PC-3 (cell line): ENCODE measurements at regions of chr17 and their contacts with region 1.

Region 1: DNA sequence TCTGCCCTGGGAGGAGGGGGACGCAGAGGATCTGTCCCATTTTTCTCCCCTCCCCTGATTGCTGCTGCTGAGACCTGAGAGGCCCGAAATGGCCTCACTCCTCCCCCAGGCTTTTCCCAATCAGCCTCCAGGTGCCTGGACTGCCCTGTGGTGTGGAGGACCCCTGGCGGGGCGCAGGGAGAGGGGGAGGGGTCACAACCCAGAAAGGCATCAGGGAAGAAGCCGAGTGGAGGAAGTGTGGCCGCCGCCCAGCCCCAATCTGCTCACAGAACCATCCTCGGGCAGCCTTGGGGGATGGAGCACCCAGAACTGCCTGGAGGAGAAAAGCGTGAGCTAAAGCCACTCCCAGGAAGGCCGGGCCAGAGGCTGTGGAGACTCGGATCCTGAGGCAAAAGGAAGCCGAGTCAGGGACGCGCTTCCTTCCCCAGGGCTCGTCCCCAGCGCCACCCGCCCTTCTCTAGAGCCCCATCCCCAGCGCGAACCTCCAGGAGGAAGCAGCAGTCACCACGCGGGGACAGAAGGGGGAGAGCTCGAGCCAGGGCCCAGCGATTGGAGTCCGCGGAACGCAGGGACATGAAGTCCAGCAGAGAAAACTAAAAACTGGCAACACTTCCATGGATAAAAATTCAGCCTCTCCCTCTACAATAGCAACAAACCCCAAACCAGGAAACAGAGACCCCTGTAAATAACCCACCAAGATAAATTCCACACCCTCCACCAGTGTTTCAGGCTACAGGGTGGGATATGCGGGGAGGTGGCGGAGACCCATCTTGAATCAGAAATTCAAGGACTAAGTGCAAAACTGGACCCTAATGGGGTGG is 116.3 kb upstream of the METRNL start:
- DNase-seq: peak; percentile 82
- ATAC-seq: peak; percentile 96
- H3K4me3 ChIP-seq: peak overlapping the region; percentile 62
- H3K27ac ChIP-seq: peak overlapping the region; percentile 60
- H3K4me1 ChIP-seq: peaks cover 18% of the 10 kb centered on the region
- H3K27me3 ChIP-seq: no peaks in the 10 kb centered on the region
- CTCF ChIP-seq: peak; percentile 74

Region 2: DNA sequence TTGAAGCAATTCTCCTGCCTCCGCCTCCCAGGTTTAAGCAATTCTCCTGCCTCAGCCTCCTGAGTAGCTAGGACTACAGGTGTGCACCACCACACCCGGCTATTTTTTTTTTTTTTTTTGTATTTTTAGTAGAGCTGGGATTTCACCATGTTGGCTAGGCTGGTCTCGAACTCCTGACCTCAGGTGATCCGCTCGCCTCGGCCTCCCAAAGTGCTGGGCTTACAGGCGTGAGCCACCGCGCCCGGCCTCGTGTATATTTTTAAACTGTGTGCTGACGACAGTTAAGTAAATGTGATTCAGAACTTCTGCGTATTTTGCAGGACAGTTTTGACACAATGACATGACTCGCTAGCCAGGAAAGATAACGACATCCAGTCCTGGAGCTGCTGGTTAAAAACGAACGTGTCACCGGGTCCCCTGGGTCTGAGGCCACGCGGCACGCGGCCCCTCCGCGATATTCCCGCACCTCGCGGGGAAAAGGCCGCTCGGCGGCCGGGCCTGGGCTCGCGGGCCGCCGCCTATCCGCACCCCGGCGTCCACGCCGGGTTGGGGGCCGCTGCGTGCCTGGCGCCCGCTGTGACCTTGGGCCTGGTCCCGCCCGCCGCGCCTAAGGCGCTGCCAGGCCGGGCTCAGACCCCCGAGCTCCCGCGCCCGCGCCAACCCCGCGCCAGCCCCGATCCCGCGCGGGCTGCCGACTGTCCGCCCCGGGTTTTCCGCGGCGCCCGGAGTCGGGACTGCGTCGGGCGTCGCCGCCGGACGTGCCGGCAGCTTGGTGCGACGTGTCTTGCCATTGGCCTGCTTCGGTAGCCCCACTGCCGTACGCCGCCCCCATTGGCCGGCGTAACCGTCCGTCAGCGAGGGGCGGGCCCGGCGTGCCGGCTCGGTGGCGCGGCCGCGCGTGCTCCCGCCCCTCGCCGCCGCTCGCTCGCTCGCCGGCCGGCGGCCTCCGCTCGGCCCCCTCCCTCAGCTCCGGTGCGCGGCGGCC is 444.0 kb before region 1 on chr17 and contains the start of gene FOXK2:
- CTCF ChIA-PET with region 1: no interaction called
- POLR2A ChIA-PET with region 1: no interaction called
- intact Hi-C with region 1: no loop called
- DNase-seq: peak; percentile 97
- ATAC-seq: peak; percentile 96
- H3K4me3 ChIP-seq: peak within 1 kb of the TSS; percentile 78
- H3K27ac ChIP-seq: peak within 1 kb of the TSS; percentile 71
- H3K4me1 ChIP-seq: peaks cover 12% of the 10 kb centered on the region; the same call in 1 of the 2 replicates
- H3K27me3 ChIP-seq: no peaks in the 10 kb centered on the region
- CTCF ChIP-seq: no peak
- total RNA-seq, gene FOXK2: 60.5 and 71.0 TPM in 2 replicates

Region 3: GRCh38 chr17:82636626-82637598 is 326.2 kb before region 1 on chr17:
- CTCF ChIA-PET with region 1: no interaction called
- POLR2A ChIA-PET with region 1: no interaction called
- intact Hi-C with region 1: no loop called
- DNase-seq: peak; percentile 40
- ATAC-seq: no peak; the same call in 1 of the 2 replicates
- H3K4me3 ChIP-seq: no peak overlapping the region
- H3K27ac ChIP-seq: peak overlapping the region; percentile 61
- H3K4me1 ChIP-seq: no peaks in the 10 kb centered on the region
- H3K27me3 ChIP-seq: no peaks in the 10 kb centered on the region
- CTCF ChIP-seq: no peak

Region 4: GRCh38 chr17:83051395-83052233 is 88.5 kb after region 1 on chr17:
- CTCF ChIA-PET with region 1: interaction called, 4 read pairs
- POLR2A ChIA-PET with region 1: no interaction called
- intact Hi-C with region 1: loop called (anchors 2 kb)
- DNase-seq: peak; percentile 98
- ATAC-seq: peak; percentile 81
- H3K4me3 ChIP-seq: peak overlapping the region; percentile 69
- H3K27ac ChIP-seq: peak overlapping the region; percentile 60
- H3K4me1 ChIP-seq: peaks cover 42% of the 10 kb centered on the region
- H3K27me3 ChIP-seq: no peaks in the 10 kb centered on the region
- CTCF ChIP-seq: no peak